B cell (primary cell): ENCODE measurements at regions of chr2 and their contacts with region 1.

Region 1: GRCh38 chr2:60926737-60927552 is 45.6 kb downstream of the REL start:
- DNase-seq: peak; percentile 60
- ATAC-seq: peak; percentile 39
- H3K4me3 ChIP-seq: no peak overlapping the region
- H3K4me3 Mint-ChIP-seq: peak overlapping the region; percentile 1
- H3K27ac ChIP-seq: peak overlapping the region; percentile 32 to 75
- H3K27ac Mint-ChIP-seq: peak overlapping the region; percentile 55
- H3K4me1 ChIP-seq: peaks cover 17 to 19% of the 10 kb centered on the region in 2 donors
- H3K4me1 Mint-ChIP-seq: peaks cover 30% of the 10 kb centered on the region
- H3K27me3 ChIP-seq: no peaks in the 10 kb centered on the region
- H3K27me3 Mint-ChIP-seq: no peaks in the 10 kb centered on the region
- CTCF ChIP-seq: no peak

Region 2: GRCh38 chr2:60939622-60940021 is 12.7 kb after region 1 on chr2:
- CTCF ChIA-PET with region 1: interaction called, 3 read pairs
- POLR2A ChIA-PET with region 1: no interaction called
- intact Hi-C with region 1: loop called (anchors 2 kb)
- DNase-seq: no peak
- ATAC-seq: no peak
- H3K4me3 ChIP-seq: no peak overlapping the region
- H3K4me3 Mint-ChIP-seq: no peak overlapping the region
- H3K27ac ChIP-seq: no peak overlapping the region
- H3K27ac Mint-ChIP-seq: peak overlapping the region; percentile 71
- H3K4me1 ChIP-seq: no peaks in the 10 kb centered on the region
- H3K4me1 Mint-ChIP-seq: peaks cover 29% of the 10 kb centered on the region
- H3K27me3 ChIP-seq: no peaks in the 10 kb centered on the region
- H3K27me3 Mint-ChIP-seq: no peaks in the 10 kb centered on the region
- CTCF ChIP-seq: no peak